Activated T-helper 2 cell treated with anti-CD3 and anti-CD28 coated beads, Interferon-gamma antibody, Interleukin-2, Interleukin-4, amounts not matched to agents 10 μg/mL and 5 μg/mL and 100 μg/mL, durations not matched to agents 14 hours and 24 hours and 36 hours (primary cell): ENCODE measurements at regions of chr3 and their contacts with region 1.

Region 1: DNA sequence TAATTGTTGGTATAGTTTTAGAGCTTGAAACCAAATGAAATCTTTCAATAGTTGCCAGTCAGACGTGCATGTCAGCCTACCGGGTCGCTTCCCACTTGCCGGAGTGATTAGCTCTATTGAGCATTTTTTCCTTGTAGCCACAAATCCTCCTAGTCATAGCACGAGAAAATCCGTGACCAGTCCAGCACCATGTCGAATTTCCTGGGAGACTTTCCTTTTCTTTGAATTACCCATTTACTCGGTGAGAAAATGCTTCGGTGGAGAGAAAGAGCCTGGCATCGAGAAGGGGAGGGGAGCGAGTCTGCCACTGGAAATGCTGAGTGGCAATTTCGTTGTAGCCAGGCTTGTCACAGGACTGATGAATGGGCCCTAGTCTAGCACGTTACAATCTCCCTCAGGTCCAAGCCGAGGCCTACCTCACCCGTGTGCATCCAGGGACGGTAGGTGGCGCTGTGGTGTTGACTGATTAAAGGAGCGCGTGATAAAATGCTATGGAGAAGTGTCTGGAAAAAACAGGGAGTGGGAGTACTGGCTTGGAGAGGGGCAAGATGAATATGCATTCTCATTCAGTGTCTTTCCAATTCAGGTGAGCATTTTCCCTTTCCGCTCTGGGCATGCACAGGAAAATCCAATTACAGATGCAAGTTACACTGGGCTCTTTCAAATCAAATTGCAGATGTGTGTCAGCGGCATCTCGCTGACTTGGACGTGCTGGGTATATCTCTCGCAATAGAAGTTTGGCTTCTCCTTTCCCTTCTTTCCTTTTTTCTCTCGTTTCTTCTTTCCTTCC is 238.8 kb downstream of the EDEM1 start:
- DNase-seq: peak; percentile 28
- H3K4me3 Mint-ChIP-seq: no peak overlapping the region
- H3K27ac Mint-ChIP-seq: no peak overlapping the region
- H3K4me1 Mint-ChIP-seq: peaks cover 2% of the 10 kb centered on the region
- H3K27me3 Mint-ChIP-seq: peaks cover 7% of the 10 kb centered on the region

Region 2: DNA sequence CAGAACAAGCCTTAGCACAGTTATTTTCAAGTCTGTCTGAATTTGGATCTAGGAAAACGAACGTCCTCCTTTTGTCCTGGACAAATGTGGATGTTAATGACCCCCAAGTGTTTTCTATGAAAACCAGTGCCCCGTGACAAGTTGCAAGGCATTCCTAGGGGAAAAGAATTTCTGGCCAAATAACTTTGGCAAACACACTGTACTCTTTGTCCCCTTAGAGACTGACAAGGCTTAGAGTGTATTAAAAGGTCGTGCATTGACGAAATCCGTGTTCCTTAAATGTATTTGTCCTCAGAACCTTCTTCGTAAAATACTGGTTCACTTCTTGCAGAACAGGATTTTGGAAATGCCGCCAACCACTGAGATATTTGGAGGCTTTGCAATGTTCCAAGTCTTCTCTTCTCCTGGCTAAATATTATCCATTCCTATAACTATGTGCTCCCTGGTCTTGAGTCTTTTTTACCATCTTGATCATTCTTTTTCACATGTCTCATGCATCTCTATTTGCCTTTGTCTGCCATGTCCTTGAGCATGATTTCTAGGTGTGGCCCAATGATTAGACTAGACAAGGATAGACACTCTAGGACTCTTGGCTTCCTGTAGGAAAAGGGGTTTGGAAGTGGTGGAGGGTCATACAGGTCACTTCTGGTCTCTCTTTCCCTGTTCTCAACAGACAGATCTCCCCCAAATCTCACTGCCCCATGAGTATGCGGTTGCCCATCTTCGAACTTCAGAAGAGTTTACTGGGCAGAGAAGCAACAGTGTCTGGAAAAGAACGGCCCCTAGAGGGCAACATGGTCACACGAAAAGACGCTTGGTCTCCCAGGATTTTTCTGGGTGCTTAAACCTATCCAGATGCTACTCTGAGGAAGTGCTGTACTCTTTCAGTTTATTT is 121.3 kb before region 1 on chr3:
- intact Hi-C with region 1: loop called (anchors 10 kb)
- DNase-seq: no peak
- H3K4me3 Mint-ChIP-seq: no peak overlapping the region
- H3K27ac Mint-ChIP-seq: no peak overlapping the region
- H3K4me1 Mint-ChIP-seq: no peaks in the 10 kb centered on the region
- H3K27me3 Mint-ChIP-seq: peaks cover 4% of the 10 kb centered on the region

Region 3: GRCh38 chr3:5644773-5645675 is 218.7 kb after region 1 on chr3:
- intact Hi-C with region 1: no loop called
- DNase-seq: no peak
- H3K4me3 Mint-ChIP-seq: no peak overlapping the region
- H3K27ac Mint-ChIP-seq: no peak overlapping the region
- H3K4me1 Mint-ChIP-seq: no peaks in the 10 kb centered on the region
- H3K27me3 Mint-ChIP-seq: no peaks in the 10 kb centered on the region